ENCODE measurements at regions of chr2 and their contacts with region 1.

Region 1: DNA sequence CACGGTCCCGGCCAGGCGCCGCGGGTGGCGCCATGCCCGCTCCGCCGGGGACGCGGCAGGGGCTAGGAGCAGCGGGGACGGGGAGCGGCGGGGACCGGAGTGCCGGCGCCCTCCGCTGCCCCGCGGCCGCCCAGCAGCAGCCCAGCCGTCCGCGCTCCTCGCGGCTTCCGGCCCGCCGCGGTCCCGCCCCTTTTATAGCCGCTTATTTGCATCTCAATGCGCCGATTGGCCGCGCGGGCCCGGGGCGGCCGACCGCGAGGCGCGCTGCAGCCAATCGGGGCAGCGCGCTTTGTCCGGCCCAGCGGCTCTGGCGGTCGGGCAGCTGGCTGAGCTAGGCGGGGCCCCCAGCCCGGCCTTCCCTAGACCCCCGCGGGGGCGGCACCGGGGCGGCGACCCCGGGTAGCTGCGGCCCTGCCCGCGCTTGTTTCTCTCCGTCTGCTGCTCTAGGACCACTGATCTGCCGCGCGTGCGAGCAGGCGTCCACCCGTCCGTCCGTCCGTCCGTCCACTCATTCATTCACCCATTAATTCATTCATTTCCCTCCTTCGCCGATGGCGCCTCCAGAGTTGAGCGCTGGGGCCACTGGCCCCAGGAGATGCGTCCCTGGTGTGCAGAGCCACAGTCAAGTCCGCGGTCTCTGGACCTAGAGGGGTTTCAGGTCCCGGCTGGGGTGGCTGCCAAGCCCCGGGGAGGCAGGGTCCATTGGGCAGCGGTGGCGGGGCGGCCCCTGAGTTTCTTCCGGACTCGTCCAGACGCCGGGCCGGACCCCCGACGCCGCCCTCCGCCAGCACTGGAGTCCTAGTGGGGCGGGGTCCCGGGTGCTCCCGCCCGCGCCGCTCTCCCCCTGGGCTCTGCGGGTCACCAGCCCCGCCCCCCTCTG is at the start of gene HES6:
- DNase-seq: peak; percentile 94
- H3K4me3 ChIP-seq: peak within 1 kb of the TSS; percentile 49 to 76 (median 74)
- H3K27ac ChIP-seq: peak within 1 kb of the TSS; percentile 81 to 89 (median 84)
- H3K4me1 ChIP-seq: peaks cover 0 to 48% (median 43%) of the 10 kb centered on the region in 4 donors
- H3K27me3 ChIP-seq: no peaks in the 10 kb centered on the region
- CTCF ChIP-seq: no peak
- EP300 ChIP-seq: no peak
- POLR2A ChIP-seq: no peak
- total RNA-seq, gene HES6: 13.2 to 27.3 (median 18.1) TPM

Region 2: DNA sequence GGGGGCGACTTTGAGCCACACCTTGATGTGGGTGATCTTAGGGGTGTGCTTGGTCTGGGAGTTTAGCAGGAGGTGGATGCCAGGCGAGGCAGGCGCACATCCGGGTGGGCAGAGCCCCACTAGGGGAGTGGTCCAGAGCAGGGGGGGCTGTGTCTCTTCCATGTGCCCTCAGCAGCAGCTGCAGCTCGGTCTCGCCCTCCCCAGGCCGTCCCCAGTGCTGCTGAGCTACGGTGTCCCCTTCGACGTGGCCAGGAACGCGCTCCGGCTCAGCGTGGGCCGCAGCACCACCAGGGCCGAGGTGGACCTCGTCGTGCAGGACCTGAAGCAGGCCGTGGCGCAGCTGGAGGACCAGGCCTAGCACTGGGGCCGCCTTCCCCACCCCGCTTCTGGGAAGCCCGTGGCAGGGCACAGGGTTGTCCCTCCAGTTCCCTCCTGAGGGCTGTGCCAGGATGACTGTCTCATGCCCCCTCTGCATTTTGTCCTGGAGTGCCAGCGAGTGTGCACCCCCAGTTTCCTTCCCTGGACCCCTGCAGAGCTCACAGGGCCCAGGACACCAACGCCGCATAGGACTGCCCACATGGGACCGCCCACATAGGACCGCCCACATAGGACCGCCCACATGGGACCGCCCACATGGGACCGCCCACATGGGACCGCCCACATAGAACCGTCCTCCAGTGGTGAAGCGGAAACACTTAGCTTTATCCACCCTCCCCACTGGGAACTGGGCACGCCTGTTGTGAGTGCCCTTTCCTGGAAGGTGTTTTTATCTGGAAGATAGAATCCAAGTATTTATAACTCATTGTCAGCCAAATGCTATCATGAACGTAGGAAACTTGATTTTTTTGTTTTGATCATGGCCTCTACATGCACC is 141.9 kb before region 1 on chr2:
- intact Hi-C with region 1: no loop called
- DNase-seq: no peak
- H3K4me3 ChIP-seq: no peak overlapping the region
- H3K27ac ChIP-seq: peak overlapping the region in 1 of 4 donors; percentile 20
- H3K4me1 ChIP-seq: no peaks in the 10 kb centered on the region
- H3K27me3 ChIP-seq: no peaks in the 10 kb centered on the region
- CTCF ChIP-seq: no peak
- EP300 ChIP-seq: no peak
- POLR2A ChIP-seq: no peak

Region 3: DNA sequence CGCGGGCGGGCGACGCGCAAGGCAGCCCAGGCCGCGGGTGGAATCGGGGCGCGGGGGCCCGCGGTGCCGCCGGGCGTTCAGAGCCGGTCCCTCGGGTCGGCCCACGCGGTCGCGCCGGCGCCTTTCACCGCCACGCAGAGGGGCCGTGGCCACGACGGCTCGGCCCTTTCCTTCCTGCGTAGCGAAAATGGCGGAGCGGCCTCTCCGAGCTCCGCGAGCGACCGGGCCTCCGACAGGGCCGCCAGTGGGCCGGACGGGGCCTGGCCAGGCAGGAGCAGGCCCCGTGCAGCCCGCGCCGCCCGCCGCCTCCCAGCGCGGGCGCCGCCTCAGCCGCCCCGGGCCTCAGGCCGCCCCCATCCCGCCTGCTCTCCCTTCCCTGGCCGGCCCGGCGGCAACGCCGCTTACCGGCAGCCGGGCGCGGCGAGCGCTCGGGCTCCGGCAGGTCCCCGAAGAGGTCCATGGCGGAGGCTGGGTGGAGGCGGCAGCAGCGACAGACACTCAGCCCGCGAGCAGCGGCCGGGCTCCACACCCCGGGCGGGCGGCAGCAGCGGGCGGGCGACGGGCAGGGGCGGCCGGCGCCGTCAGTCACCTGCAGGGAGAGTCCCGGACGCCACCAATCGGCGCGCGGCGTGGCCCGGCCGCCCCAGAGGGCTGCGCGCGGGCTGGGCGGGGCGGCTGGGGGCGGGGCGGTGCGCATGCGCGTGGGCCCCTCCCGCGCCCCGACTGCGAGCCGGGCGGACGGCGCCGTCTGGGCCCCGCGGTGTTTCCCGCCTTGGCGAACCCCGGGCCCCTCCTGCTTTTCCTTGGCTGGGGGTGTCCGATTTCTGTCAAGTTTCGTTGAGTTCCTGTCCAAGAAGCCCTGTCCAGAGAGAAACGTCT is 36.8 kb before region 1 on chr2 and contains the start of gene ILKAP:
- intact Hi-C with region 1: loop called (anchors 2 kb)
- DNase-seq: peak; percentile 95
- H3K4me3 ChIP-seq: peak within 1 kb of the TSS; percentile 51 to 97 (median 82)
- H3K27ac ChIP-seq: peak within 1 kb of the TSS; percentile 90 to 99 (median 95)
- H3K4me1 ChIP-seq: peaks cover 0 to 46% (median 43%) of the 10 kb centered on the region in 4 donors
- H3K27me3 ChIP-seq: no peaks in the 10 kb centered on the region
- CTCF ChIP-seq: no peak
- EP300 ChIP-seq: no peak
- POLR2A ChIP-seq: peak; percentile 68 to 69
- total RNA-seq, gene ILKAP: 32.2 to 57.3 (median 45.3) TPM

Region 4: GRCh38 chr2:238985871-238986446 is 745.8 kb after region 1 on chr2:
- intact Hi-C with region 1: no loop called
- DNase-seq: peak; percentile 55
- H3K4me3 ChIP-seq: no peak overlapping the region
- H3K27ac ChIP-seq: no peak overlapping the region
- H3K4me1 ChIP-seq: peaks cover 0 to 9% (median 8%) of the 10 kb centered on the region in 4 donors
- H3K27me3 ChIP-seq: no peaks in the 10 kb centered on the region
- CTCF ChIP-seq: no peak
- EP300 ChIP-seq: no peak
- POLR2A ChIP-seq: no peak

Measured in sigmoid colon (tissue), 7 donors.